Posterior cingulate gyrus (tissue), 11 donors: ENCODE measurements at regions of chr1 and their contacts with region 1.

Region 1: GRCh38 chr1:78892260-78892840 is 114.2 kb downstream of the ADGRL4 start:
- DNase-seq: no peak

Region 2: GRCh38 chr1:78229344-78229743 is 663.0 kb before region 1 on chr1:
- intact Hi-C with region 1: loop called (anchors 10 kb)
- DNase-seq: no peak